Astrocyte of the spinal cord (primary cell): ENCODE measurements at regions of chr13 and their contacts with region 1.

Region 1: DNA sequence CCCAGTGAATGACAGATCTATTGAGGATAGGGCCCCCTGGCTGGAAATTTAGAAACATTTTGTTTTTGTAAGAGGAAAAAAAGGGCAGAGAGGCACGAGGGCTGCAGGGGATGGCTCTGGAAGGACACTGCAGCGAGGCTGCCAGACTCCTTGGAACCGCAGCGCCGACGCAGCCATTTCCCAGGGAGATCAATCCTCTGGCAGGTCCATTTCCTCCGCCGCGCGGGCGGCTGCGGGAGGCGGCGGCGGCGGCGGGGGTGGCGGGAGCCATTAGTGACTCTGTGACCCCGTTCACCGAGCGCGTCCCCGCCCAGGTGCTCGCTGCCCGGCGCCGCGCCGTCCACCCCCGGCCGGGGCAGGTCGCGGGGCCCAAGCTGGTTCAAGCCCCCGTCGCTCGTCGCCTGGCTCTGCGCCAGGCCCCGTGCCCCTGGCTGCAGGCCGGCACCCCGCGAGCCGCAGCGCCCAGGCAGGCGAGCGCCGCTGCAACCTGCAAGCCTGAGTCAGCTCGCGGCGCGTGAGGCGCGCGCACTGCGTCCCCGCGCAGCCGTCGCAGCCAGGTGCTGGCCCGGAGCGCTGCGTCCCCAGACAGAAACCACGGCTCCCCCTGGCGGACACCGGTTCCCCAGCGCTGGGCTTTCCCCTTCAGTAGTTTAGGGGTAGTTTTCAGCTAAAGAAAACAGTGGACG is 192.6 kb downstream of the KATNAL1 start:
- DNase-seq: peak; percentile 79
- H3K4me3 ChIP-seq: peak overlapping the region; percentile 27
- CTCF ChIP-seq: peak; percentile 94

Region 2: GRCh38 chr13:29310806-29311205 is 803.9 kb before region 1 on chr13:
- in situ Hi-C with region 1: no loop called
- DNase-seq: no peak
- H3K4me3 ChIP-seq: no peak overlapping the region
- CTCF ChIP-seq: no peak

Region 3: GRCh38 chr13:29923554-29924481 is 190.9 kb before region 1 on chr13:
- in situ Hi-C with region 1: loop called (anchors 25 kb)
- DNase-seq: peak; percentile 99
- H3K4me3 ChIP-seq: no peak overlapping the region
- CTCF ChIP-seq: peak; percentile 94